Mammary epithelial cell (primary cell): ENCODE measurements at regions of chr1 and their contacts with region 1.

Region 1: GRCh38 chr1:64966158-64966971 is at the start of gene JAK1:
- DNase-seq: peak; percentile 71
- H3K4me3 ChIP-seq: peak within 1 kb of the TSS; percentile 79 to 89 (median 87)
- H3K27ac ChIP-seq: peak within 1 kb of the TSS; percentile 87
- H3K4me1 ChIP-seq: peaks cover 25% of the 10 kb centered on the region
- H3K27me3 ChIP-seq: no peaks in the 10 kb centered on the region
- CTCF ChIP-seq: no peak
- total RNA-seq, gene JAK1: 74.9 to 125 TPM

Region 2: DNA sequence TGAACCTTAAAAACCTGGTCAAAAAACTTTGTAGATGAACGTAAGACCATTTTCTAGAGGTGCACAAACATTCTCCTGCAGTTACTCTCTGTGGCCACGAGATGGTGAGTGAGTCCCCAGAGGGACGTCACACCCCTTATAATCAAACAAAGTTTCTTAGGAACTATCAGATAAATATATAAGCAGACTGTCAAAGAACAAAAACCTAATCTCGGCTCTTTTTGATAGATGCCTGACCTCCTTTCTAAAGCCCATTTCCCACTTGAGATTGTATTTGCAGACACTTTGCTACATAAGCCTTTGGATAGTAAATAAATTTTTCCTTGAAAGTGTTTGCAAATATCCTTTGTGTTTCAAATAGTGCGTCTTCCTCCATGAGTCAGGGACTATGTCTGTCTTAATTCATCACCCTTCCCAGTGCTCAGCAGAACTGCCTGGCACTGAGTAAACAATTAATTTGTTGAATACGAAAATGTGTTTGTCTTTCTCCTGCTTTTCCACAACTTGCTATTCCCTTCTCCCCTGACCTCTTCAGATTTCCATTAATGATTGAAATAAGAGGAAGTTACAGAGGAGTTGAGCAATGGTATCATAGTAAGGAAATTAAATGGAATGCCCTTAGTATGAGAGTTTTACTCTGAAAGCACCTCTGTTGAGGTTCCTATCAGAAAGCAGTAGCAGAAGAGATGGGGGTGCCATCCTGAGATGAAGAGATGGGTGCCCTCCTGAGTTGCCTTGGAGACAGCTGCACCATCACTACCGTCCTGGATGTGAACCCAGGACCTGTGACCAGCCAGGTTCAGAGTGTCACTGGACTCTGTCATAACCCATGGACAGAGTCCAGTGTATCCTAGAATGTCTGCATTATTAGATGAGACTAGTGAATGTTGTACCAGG is 279.3 kb before region 1 on chr1:
- CTCF ChIA-PET with region 1: interaction called, 3 read pairs
- dilution Hi-C with region 1: no loop called
- in situ Hi-C with region 1: no loop called
- intact Hi-C with region 1: loop called (anchors 2 kb)
- DNase-seq: peak; percentile 21
- H3K4me3 ChIP-seq: no peak overlapping the region
- H3K27ac ChIP-seq: peak overlapping the region; percentile 3
- H3K4me1 ChIP-seq: peaks cover 14% of the 10 kb centered on the region
- H3K27me3 ChIP-seq: no peaks in the 10 kb centered on the region
- CTCF ChIP-seq: peak; percentile 86 to 88

Region 3: GRCh38 chr1:64823691-64824476 is 142.5 kb before region 1 on chr1:
- CTCF ChIA-PET with region 1: no interaction called
- dilution Hi-C with region 1: no loop called
- in situ Hi-C with region 1: no loop called
- intact Hi-C with region 1: loop called (anchors 5 kb)
- DNase-seq: peak; percentile 59
- H3K4me3 ChIP-seq: no peak overlapping the region
- H3K27ac ChIP-seq: no peak overlapping the region
- H3K4me1 ChIP-seq: no peaks in the 10 kb centered on the region
- H3K27me3 ChIP-seq: no peaks in the 10 kb centered on the region
- CTCF ChIP-seq: peak; percentile 66 to 83

Region 4: GRCh38 chr1:64856553-64856952 is 109.8 kb before region 1 on chr1:
- CTCF ChIA-PET with region 1: interaction called, 3 read pairs
- dilution Hi-C with region 1: no loop called
- in situ Hi-C with region 1: no loop called
- intact Hi-C with region 1: loop called (anchors 2 kb)
- DNase-seq: peak; percentile 35
- H3K4me3 ChIP-seq: no peak overlapping the region
- H3K27ac ChIP-seq: no peak overlapping the region
- H3K4me1 ChIP-seq: peaks cover 4% of the 10 kb centered on the region
- H3K27me3 ChIP-seq: no peaks in the 10 kb centered on the region
- CTCF ChIP-seq: peak in 1 of 2 donors; percentile 18

Region 5: DNA sequence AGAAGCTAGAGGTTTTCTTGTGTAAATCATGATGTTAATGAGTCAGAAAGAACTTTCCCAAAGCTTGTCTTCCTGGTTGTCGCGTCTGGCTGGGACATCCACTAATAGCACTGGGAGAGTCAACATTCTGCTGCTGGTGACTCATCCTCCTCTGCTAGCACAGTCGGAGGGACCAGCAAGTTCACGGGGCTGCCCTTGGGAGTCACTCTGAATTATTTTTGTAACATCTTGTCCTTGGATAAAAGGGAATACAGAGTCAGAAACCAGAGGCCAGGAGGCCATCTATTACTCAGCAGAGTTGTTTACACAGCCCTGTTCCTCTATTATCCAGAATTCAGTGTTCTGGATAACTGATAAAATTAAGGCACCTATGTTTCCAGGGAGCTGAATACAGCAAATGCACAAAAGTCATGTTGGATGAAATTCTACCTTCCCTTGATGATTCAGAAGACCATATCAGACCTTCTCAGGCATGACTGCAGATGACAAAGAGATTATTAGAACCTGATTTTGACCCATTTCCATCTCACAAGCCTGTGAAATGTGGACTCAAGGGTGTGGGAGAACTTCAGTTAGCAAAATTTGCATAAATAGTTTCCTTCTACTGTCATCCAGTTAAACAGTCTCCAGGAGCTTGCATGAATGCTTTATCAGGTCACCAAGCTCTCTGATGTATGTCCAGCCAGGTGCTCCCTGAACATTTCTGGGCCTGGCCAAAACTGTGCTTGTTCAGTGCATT is 68.1 kb before region 1 on chr1:
- CTCF ChIA-PET with region 1: interaction called, 8 read pairs
- dilution Hi-C with region 1: no loop called
- in situ Hi-C with region 1: no loop called
- intact Hi-C with region 1: loop called (anchors 1 kb)
- DNase-seq: peak; percentile 91
- H3K4me3 ChIP-seq: no peak overlapping the region
- H3K27ac ChIP-seq: peak overlapping the region; percentile 78
- H3K4me1 ChIP-seq: peaks cover 38% of the 10 kb centered on the region
- H3K27me3 ChIP-seq: no peaks in the 10 kb centered on the region
- CTCF ChIP-seq: no peak

Region 6: DNA sequence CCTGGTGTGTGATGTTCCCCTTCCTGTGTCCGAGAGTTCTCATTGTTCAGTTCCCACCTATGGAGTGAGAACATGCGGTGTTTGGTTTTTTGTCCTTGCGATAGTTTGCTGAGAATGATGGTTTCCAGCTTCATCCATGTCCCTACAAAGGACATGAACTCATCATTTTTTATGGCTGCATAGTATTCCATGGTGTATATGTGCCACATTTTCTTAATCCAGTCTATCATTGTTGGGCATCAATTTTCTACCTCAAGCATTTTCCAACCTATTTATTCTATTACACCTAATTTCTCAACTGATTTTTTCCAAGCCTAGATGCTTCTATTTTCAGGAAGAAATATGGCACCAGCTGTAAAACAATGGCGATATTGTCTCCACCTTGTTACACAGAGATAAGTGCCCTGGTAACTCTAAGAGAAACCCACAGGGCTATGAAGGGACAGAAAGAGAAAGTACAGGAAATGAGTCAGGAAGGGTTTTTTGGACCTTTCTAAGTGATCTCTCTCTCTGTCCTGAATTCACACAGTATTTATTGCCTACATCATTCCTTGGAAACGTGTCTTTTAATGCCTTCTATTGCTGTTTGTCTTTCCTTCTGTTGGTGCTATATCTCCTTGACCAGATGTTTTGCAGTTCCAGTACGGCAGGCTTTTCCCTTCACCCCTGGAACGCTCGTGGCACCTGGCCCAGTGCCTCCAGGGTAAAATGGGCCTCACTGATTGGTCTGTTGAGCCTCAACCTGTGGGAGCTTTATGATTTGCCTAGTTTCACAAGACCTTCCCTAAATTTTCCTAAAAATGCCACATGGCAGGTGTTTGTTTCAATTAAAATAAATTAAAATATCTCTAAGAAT is 14.6 kb after region 1 on chr1:
- CTCF ChIA-PET with region 1: no interaction called
- dilution Hi-C with region 1: no loop called
- in situ Hi-C with region 1: no loop called
- intact Hi-C with region 1: no loop called
- DNase-seq: peak; percentile 78
- H3K4me3 ChIP-seq: no peak overlapping the region
- H3K27ac ChIP-seq: peak overlapping the region; percentile 4
- H3K4me1 ChIP-seq: peaks cover 25% of the 10 kb centered on the region
- H3K27me3 ChIP-seq: no peaks in the 10 kb centered on the region
- CTCF ChIP-seq: no peak

Region 7: DNA sequence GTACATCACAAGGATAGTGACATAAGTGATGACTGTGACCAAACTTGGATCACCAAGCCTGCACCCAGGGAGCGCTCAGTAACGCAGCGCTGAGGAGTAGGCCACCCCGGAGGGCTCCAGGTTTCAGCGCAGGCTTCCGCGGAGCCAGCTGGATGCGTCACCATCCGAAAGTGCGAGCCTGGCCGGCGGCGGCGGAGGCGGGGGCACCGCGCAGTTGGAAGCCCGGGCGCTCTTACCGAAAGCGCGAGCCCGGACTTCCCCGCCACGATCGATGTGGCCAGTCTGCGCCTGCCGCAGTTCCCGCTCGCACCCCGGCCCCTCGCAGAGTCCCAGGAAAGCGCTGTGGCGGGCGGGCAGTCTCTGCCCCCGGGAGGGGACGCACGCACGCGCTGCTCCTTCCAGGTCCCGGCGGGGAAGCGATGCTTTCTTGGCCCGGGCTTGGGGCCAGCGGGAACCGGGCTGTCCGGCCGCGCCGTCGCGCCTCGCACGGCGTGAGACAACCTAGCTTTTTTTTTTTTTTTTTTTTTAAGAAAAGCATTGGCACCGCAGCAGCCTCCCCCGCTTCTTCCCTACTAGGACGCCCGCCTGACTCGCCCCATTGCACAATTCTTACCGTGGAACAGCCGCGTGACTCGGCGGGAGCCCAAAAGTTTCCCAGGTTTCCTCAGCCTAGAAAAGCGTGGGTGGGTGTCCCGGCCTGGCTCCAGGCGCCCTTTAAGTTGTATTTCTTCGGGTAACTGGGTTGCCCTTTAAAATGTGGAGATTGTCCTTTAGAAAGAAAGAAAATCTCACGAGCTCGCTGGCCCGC is 36.3 kb after region 1 on chr1:
- CTCF ChIA-PET with region 1: no interaction called
- dilution Hi-C with region 1: no loop called
- in situ Hi-C with region 1: no loop called
- intact Hi-C with region 1: loop called (anchors 2 kb)
- DNase-seq: peak; percentile 89
- H3K4me3 ChIP-seq: peak overlapping the region; percentile 70 to 74 (median 70)
- H3K27ac ChIP-seq: peak overlapping the region; percentile 94
- H3K4me1 ChIP-seq: peaks cover 9% of the 10 kb centered on the region
- H3K27me3 ChIP-seq: no peaks in the 10 kb centered on the region
- CTCF ChIP-seq: no peak

Region 8: GRCh38 chr1:65090403-65090802 is 124.0 kb after region 1 on chr1:
- CTCF ChIA-PET with region 1: no interaction called
- dilution Hi-C with region 1: no loop called
- in situ Hi-C with region 1: no loop called
- intact Hi-C with region 1: no loop called
- DNase-seq: no peak
- H3K4me3 ChIP-seq: no peak overlapping the region
- H3K27ac ChIP-seq: no peak overlapping the region
- H3K4me1 ChIP-seq: no peaks in the 10 kb centered on the region
- H3K27me3 ChIP-seq: peaks cover 2% of the 10 kb centered on the region
- CTCF ChIP-seq: no peak